Naive thymus-derived CD4-positive, alpha-beta T cell (primary cell): ENCODE measurements at regions of chr22 and their contacts with region 1.

Region 1: DNA sequence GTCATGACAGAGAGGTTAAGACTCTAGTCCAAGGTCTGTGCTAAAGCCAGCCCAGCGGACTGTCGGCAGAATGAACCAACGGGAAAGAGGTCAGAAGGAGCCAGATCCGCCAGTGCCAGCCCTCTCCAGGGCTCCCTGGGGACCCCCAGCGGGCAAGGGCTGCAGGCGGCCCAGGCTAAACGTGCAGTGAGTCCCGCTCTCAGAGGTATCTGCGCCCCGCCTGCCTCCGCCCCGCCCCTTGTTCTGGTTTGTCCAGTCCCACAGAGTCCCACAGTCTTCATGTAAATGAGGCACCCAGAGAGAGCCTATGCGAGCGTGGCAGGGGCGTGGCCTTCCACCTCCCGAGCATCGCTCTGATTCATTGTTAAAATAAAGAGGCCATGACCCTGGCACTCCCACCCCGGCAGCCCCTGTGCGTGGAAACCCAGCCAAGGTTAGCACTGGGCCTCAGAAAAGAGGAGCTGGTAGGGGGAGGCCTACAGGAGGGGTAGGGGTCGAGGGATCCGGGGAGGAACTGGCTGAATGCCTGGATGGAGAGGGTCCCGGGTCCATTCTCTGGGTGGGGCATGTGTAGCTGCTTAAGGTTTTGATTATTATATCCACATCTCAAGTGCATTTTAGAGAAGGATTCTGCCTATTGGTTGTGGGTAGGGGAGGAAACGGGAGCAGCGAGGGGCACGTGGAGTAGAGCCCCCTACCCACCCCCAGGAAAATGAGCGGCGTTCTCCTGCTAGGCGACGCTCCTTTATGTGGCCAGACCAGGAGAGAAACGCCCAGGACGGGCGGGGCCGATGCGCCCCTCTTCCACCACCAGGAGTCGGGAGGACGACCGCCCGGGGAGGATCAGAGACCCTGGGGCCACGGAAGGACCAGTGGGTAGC is at the start of gene TRIOBP:
- DNase-seq: peak; percentile 73 to 95 (median 81)
- ATAC-seq: peak; percentile 100
- H3K4me3 ChIP-seq: no peak within 1 kb of the TSS
- H3K4me3 Mint-ChIP-seq: peak within 1 kb of the TSS in 9 of 10 donors; percentile 36 to 73 (median 69)
- H3K27ac ChIP-seq: no peak within 1 kb of the TSS
- H3K27ac Mint-ChIP-seq: peak within 1 kb of the TSS in 5 of 9 donors; percentile 12 to 83 (median 59)
- H3K4me1 ChIP-seq: peaks cover 0 to 14% of the 10 kb centered on the region in 2 donors
- H3K4me1 Mint-ChIP-seq: peaks cover 12 to 23% (median 15%) of the 10 kb centered on the region in 7 donors
- H3K27me3 ChIP-seq: no peaks in the 10 kb centered on the region
- H3K27me3 Mint-ChIP-seq: no peaks in the 10 kb centered on the region
- total RNA-seq, gene TRIOBP: 15.0 to 43.0 (median 25.7) TPM

Region 2: GRCh38 chr22:37745548-37746365 is 48.9 kb after region 1 on chr22:
- CTCF ChIA-PET with region 1: interaction called, 3 read pairs
- POLR2A ChIA-PET with region 1: no interaction called
- intact Hi-C with region 1: loop called in 1 of 2 experiments (anchors 2 kb)
- DNase-seq: peak; percentile 67 to 90 (median 78)
- ATAC-seq: peak; percentile 97
- H3K4me3 ChIP-seq: peak overlapping the region; percentile 74
- H3K4me3 Mint-ChIP-seq: peak overlapping the region; percentile 82 to 96 (median 92)
- H3K27ac ChIP-seq: peak overlapping the region; percentile 77
- H3K27ac Mint-ChIP-seq: peak overlapping the region; percentile 75 to 93 (median 87)
- H3K4me1 ChIP-seq: peaks cover 9 to 18% of the 10 kb centered on the region in 2 donors
- H3K4me1 Mint-ChIP-seq: peaks cover 13 to 36% (median 26%) of the 10 kb centered on the region in 7 donors
- H3K27me3 ChIP-seq: no peaks in the 10 kb centered on the region
- H3K27me3 Mint-ChIP-seq: no peaks in the 10 kb centered on the region